Activated naive CD4-positive, alpha-beta T cell treated with anti-CD3 and anti-CD28 coated beads for 36 hours (primary cell): ENCODE measurements at regions of chr5 and their contacts with region 1.

Region 1: DNA sequence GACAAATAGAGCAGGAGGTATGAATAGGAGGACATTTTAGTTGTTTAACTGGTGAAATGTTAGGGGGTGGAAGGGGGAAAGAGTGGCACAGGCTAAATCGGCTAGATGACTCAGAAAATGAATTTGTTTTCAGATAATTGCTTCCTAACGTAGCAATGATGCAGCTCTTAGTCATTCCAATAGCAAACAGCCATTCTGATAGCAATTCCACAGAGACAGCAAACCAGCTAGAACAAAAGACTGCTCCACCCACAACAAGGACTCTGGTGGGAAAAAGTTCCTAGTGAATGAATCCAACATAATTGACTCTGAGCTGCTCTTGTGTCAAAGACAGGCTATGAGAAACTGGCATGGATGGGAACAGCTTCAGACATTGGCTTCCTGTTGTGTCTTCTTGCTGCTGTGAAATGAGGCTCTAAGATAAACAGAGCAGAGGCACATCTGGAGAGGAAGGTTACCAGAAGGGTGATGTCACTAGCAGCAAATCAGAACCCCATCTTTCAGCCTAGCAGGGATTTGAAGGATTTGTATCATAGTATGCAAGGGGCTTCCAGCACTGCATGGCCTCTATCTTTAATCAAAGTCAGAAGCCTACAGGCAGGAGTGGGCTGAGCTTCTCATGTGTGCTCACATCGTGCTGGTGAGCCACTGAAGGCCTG is 28.1 kb upstream of the F2RL1 start:
- DNase-seq: peak; percentile 49
- H3K4me3 Mint-ChIP-seq: no peak overlapping the region
- H3K27ac Mint-ChIP-seq: peak overlapping the region; percentile 70
- H3K4me1 Mint-ChIP-seq: peaks cover 18% of the 10 kb centered on the region
- H3K27me3 Mint-ChIP-seq: no peaks in the 10 kb centered on the region

Region 2: GRCh38 chr5:76691467-76692138 is 99.2 kb before region 1 on chr5:
- CTCF ChIA-PET with region 1: no interaction called
- intact Hi-C with region 1: loop called (anchors 1 kb)
- DNase-seq: no peak
- H3K4me3 Mint-ChIP-seq: no peak overlapping the region
- H3K27ac Mint-ChIP-seq: peak overlapping the region; percentile 36
- H3K4me1 Mint-ChIP-seq: peaks cover 15% of the 10 kb centered on the region
- H3K27me3 Mint-ChIP-seq: no peaks in the 10 kb centered on the region

Region 3: DNA sequence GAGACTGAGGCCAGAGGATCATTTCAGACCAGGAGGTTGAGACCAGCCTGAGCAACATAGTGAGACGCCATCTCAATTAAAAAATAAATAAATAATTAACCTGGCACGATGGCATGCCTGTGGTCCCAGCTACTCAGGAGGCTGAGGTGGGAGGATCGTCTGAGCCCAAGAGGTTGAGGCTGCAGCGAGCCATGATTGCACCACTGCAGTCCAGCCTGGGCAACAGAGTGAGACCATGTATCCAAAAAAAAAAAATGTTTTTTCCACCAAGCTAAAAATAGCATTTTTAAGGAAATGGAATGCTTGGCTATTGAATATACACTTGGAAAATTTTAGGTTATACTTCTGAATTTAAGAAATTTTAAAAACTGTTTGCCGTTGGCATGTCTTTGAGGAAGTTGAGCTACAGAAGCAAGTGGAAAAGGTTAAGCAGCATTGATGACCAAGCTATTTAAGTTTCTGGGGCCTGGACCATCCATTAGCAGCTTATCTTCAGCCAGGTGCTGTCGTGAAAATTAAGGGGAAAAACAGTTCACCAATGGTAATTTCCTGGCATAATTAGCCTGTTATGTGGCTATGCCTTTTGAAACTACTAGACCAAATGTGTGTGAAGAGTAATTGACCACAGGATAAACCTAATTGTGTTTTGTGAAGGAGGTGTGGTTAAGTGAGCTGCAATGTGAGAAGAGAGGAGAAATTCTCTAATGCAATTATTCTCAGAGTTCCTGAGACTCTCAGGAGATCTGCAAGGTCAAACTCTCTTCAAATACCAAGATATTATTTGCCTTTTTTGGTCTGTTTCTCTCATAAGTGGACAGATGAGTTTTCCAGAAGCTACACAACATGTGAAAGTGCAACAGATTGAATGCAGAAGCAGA is 53.8 kb before region 1 on chr5:
- CTCF ChIA-PET with region 1: no interaction called
- intact Hi-C with region 1: loop called (anchors 1 kb)
- DNase-seq: no peak
- H3K4me3 Mint-ChIP-seq: no peak overlapping the region
- H3K27ac Mint-ChIP-seq: no peak overlapping the region
- H3K4me1 Mint-ChIP-seq: peaks cover 19% of the 10 kb centered on the region
- H3K27me3 Mint-ChIP-seq: no peaks in the 10 kb centered on the region

Region 4: DNA sequence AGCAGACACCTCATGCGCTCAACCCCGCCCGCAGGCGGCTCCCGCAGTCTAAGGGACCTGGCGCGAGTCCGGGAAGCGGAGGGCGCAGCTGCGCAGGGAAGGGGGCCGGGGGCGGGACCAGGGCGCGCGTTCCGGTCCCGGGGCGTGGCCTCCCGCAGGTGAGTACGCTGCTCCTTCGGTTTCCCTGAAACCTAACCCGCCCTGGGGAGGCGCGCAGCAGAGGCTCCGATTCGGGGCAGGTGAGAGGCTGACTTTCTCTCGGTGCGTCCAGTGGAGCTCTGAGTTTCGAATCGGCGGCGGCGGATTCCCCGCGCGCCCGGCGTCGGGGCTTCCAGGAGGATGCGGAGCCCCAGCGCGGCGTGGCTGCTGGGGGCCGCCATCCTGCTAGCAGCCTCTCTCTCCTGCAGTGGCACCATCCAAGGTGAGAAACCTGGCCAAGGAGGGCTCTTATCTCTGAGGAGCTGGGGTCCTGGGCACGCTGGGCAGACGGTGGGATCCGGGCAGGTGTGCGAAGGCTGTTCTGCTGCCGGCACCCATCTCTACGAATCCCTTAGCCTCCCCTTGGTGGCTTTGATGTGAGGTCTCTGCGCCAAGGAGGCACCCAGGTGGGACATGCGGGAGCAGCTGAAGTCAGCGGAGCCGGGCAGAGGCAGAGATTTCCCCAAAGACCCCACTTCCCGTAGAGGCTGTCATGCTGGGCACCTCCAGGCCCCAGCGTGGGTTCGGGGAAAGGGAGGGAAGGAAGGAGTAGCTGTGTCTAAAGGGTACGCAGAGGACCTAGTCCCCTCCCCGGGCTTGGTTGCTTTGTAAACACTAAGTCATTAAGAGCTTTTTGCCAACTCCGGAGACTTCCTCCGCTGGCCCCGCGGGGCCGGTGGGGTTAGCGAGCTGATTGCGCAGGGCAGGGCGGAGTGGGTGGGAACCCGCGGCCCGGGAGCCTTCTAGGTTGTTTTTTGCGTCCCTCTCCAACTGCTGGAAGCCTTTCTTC is 28.4 kb after region 1 on chr5 and contains the start of gene F2RL1:
- CTCF ChIA-PET with region 1: no interaction called
- intact Hi-C with region 1: loop called (anchors 2 kb)
- DNase-seq: peak; percentile 67
- H3K4me3 Mint-ChIP-seq: peak within 1 kb of the TSS; percentile 80
- H3K27ac Mint-ChIP-seq: no peak within 1 kb of the TSS
- H3K4me1 Mint-ChIP-seq: peaks cover 16% of the 10 kb centered on the region
- H3K27me3 Mint-ChIP-seq: peaks cover 11% of the 10 kb centered on the region
- total RNA-seq, gene F2RL1: 2.9 to 3.0 TPM

Region 5: GRCh38 chr5:76855961-76856360 is 65.2 kb after region 1 on chr5:
- CTCF ChIA-PET with region 1: no interaction called
- intact Hi-C with region 1: loop called (anchors 2 kb)
- DNase-seq: peak; percentile 68
- H3K4me3 Mint-ChIP-seq: peak overlapping the region; percentile 19
- H3K27ac Mint-ChIP-seq: peak overlapping the region; percentile 79
- H3K4me1 Mint-ChIP-seq: peaks cover 16% of the 10 kb centered on the region
- H3K27me3 Mint-ChIP-seq: no peaks in the 10 kb centered on the region